ENCODE measurements at regions of chr10 and their contacts with region 1.

Region 1: DNA sequence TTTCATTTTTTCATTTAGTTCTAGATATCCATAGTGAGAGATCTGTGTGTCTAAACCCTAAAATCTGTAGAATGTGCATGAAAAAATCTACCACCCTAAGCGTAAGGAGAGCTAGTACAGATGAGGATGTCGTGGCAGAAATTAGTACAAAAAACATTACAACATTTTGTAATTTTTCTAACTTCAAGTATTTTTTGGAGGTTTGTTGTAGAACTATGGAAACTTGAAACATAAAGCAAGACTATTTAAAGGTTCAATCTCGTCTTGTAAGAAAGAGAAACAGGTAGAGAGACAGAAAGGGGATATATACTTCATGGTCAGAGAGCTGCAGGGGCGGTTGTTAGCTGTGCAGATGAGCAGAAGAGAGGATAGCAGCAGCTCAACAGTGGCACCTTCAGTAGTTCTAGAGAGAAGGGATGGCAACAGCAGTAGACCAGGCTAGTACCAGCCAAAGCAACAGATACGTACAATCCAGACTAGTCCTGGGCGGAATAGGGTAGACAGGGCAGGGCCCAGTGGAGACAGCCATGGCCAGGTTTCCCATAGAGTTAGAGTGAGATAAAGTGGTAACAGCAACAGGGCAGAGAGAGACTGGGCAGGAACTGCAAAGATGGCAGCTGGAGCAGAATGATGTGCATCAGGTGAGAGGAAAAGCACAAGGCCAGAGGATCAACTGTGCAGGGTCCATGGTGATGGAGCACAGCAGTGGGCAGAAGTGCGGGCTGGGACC is 145.2 kb downstream of the FRMD4A start:
- DNase-seq: peak; percentile 89
- ATAC-seq: peak; percentile 79
- H3K4me3 ChIP-seq: peak overlapping the region in 4 of 5 experiments; percentile 27 to 59 (median 45)
- H3K4me3 Mint-ChIP-seq: peak overlapping the region; percentile 79
- H3K27ac ChIP-seq: peak overlapping the region; percentile 93 to 98
- H3K27ac Mint-ChIP-seq: peak overlapping the region; percentile 92
- H3K4me1 ChIP-seq: peaks cover 33 to 52% of the 10 kb centered on the region in 2 donors
- H3K4me1 Mint-ChIP-seq: peaks cover 38% of the 10 kb centered on the region
- H3K27me3 ChIP-seq: peaks cover 0 to 22% (median 14%) of the 10 kb centered on the region in 4 experiments
- H3K27me3 Mint-ChIP-seq: peaks cover 18% of the 10 kb centered on the region
- CTCF ChIP-seq: no peak

Region 2: DNA sequence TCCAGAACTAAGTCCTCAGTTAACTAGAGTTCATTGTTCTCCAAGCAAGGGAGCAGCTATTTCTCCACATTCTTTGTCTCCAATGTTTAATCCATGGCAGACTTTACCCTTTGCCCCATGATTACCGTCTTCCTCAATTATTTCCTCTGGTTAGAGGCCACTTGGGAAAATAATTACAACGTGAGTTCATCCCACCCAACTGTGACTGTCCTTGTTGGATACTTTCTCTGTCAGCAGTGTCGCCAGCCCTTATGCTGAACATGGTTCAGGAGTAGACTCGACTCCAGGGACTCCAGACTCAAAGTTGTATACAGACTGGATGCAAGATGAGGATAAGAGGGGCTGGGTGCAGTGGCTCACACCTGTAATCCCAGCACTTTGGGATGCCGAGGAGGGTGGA is 820.2 kb before region 1 on chr10:
- CTCF ChIA-PET with region 1: no interaction called
- POLR2A ChIA-PET with region 1: no interaction called
- intact Hi-C with region 1: no loop called
- DNase-seq: no peak
- ATAC-seq: no peak
- H3K4me3 ChIP-seq: no peak overlapping the region
- H3K4me3 Mint-ChIP-seq: no peak overlapping the region
- H3K27ac ChIP-seq: no peak overlapping the region
- H3K27ac Mint-ChIP-seq: no peak overlapping the region
- H3K4me1 ChIP-seq: no peaks in the 10 kb centered on the region
- H3K4me1 Mint-ChIP-seq: no peaks in the 10 kb centered on the region
- H3K27me3 ChIP-seq: no peaks in the 10 kb centered on the region
- H3K27me3 Mint-ChIP-seq: peaks cover 6% of the 10 kb centered on the region
- CTCF ChIP-seq: no peak

Region 3: GRCh38 chr10:13659897-13660550 is 525.5 kb before region 1 on chr10:
- CTCF ChIA-PET with region 1: interaction called, 5 read pairs
- POLR2A ChIA-PET with region 1: no interaction called
- intact Hi-C with region 1: loop called (anchors 1 kb)
- DNase-seq: peak; percentile 75
- ATAC-seq: peak; percentile 67
- H3K4me3 ChIP-seq: no peak overlapping the region
- H3K4me3 Mint-ChIP-seq: no peak overlapping the region
- H3K27ac ChIP-seq: no peak overlapping the region
- H3K27ac Mint-ChIP-seq: peak overlapping the region; percentile 26
- H3K4me1 ChIP-seq: peaks cover 7 to 16% of the 10 kb centered on the region in 2 donors
- H3K4me1 Mint-ChIP-seq: peaks cover 9% of the 10 kb centered on the region
- H3K27me3 ChIP-seq: peaks cover 0 to 7% (median 0%) of the 10 kb centered on the region in 4 experiments
- H3K27me3 Mint-ChIP-seq: no peaks in the 10 kb centered on the region
- CTCF ChIP-seq: peak; percentile 89

Region 4: GRCh38 chr10:14024329-14025202 is 160.9 kb before region 1 on chr10:
- CTCF ChIA-PET with region 1: no interaction called
- POLR2A ChIA-PET with region 1: no interaction called
- intact Hi-C with region 1: loop called (anchors 10 kb)
- DNase-seq: peak; percentile 47
- ATAC-seq: peak; percentile 41
- H3K4me3 ChIP-seq: peak overlapping the region in 3 of 5 experiments; percentile 32 to 55 (median 51)
- H3K4me3 Mint-ChIP-seq: peak overlapping the region; percentile 88
- H3K27ac ChIP-seq: peak overlapping the region in 1 of 2 donors; percentile 32
- H3K27ac Mint-ChIP-seq: peak overlapping the region; percentile 90
- H3K4me1 ChIP-seq: peaks cover 6 to 25% of the 10 kb centered on the region in 2 donors
- H3K4me1 Mint-ChIP-seq: peaks cover 42% of the 10 kb centered on the region
- H3K27me3 ChIP-seq: peaks cover 0 to 18% (median 2%) of the 10 kb centered on the region in 4 experiments
- H3K27me3 Mint-ChIP-seq: peaks cover 34% of the 10 kb centered on the region
- CTCF ChIP-seq: no peak

Region 5: GRCh38 chr10:14200698-14201544 is 15.4 kb after region 1 on chr10:
- CTCF ChIA-PET with region 1: interaction called, 83 read pairs
- POLR2A ChIA-PET with region 1: no interaction called
- intact Hi-C with region 1: no loop called
- DNase-seq: no peak
- ATAC-seq: no peak
- H3K4me3 ChIP-seq: no peak overlapping the region
- H3K4me3 Mint-ChIP-seq: no peak overlapping the region
- H3K27ac ChIP-seq: no peak overlapping the region
- H3K27ac Mint-ChIP-seq: no peak overlapping the region
- H3K4me1 ChIP-seq: no peaks in the 10 kb centered on the region
- H3K4me1 Mint-ChIP-seq: no peaks in the 10 kb centered on the region
- H3K27me3 ChIP-seq: peaks cover 0 to 9% (median 2%) of the 10 kb centered on the region in 4 experiments
- H3K27me3 Mint-ChIP-seq: peaks cover 29% of the 10 kb centered on the region
- CTCF ChIP-seq: no peak

Region 6: DNA sequence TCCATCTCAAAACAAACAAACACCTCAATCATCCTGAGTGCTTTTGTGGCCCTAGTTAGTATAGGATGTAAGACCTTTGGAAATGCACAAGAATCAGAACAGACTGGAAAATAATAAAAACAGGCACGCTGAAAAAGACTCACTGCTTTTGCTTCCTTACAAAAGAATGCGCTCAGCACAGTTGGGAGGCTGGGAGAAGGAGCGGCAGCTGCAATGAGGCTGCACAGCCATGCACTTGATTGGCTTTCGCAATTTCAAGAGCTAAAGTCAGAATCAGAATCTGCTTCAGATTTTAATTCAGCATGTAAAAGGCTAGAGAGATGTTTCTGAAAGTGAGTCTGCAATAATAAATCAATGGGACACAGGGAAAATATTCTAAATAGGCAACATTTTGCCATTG is 48.1 kb after region 1 on chr10:
- CTCF ChIA-PET with region 1: no interaction called
- POLR2A ChIA-PET with region 1: no interaction called
- intact Hi-C with region 1: no loop called
- DNase-seq: no peak
- ATAC-seq: no peak
- H3K4me3 ChIP-seq: no peak overlapping the region
- H3K4me3 Mint-ChIP-seq: no peak overlapping the region
- H3K27ac ChIP-seq: no peak overlapping the region
- H3K27ac Mint-ChIP-seq: no peak overlapping the region
- H3K4me1 ChIP-seq: no peaks in the 10 kb centered on the region
- H3K4me1 Mint-ChIP-seq: no peaks in the 10 kb centered on the region
- H3K27me3 ChIP-seq: peaks cover 0 to 8% (median 3%) of the 10 kb centered on the region in 4 experiments
- H3K27me3 Mint-ChIP-seq: peaks cover 44% of the 10 kb centered on the region
- CTCF ChIP-seq: no peak

Region 7: DNA sequence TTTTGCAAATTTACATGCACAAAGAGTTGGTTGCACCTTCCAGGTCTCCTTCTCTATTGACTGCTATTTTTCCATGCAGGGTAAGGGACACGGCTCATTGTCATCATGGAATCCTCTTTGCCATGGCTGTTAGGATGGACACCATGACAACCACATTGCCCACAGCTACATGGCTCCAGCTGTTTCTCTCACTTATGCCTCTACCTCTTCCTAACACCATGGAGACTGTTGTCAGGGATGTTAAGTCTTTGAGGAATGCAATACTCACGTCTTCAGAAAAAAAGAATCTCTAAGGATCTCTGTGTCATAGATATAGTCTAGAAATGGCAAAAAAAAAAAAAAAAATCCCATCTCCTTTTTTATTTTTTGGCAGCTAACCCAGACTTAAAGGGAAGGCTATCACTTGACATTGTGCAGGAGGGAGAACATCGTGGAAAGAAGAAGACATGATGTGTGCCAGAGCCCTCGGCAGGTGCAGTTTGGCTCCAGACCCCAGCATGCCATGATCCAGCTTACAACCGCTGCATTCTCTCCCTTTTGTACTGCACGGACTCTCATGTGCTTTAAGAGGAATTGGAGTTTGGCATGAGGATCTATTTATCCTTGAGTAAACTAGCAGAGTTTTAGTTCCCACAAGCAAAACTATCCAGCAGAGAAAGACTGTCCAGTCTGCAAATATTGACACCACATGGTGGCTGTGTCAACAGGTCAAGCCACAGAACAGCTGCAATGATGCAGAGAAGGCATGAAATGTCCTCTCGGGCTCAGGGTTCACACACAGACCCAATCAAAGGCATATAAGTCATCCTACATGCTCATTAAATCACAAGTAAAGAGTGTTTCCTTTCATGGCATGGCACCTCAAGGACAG is 74.5 kb after region 1 on chr10:
- CTCF ChIA-PET with region 1: no interaction called
- POLR2A ChIA-PET with region 1: no interaction called
- intact Hi-C with region 1: no loop called
- DNase-seq: no peak
- ATAC-seq: no peak
- H3K4me3 ChIP-seq: no peak overlapping the region
- H3K4me3 Mint-ChIP-seq: no peak overlapping the region
- H3K27ac ChIP-seq: no peak overlapping the region
- H3K27ac Mint-ChIP-seq: no peak overlapping the region
- H3K4me1 ChIP-seq: no peaks in the 10 kb centered on the region
- H3K4me1 Mint-ChIP-seq: no peaks in the 10 kb centered on the region
- H3K27me3 ChIP-seq: peaks cover 0 to 11% (median 0%) of the 10 kb centered on the region in 4 experiments
- H3K27me3 Mint-ChIP-seq: peaks cover 43% of the 10 kb centered on the region
- CTCF ChIP-seq: no peak